ENCODE measurements at regions of chr2 and their contacts with region 1.

Region 1: DNA sequence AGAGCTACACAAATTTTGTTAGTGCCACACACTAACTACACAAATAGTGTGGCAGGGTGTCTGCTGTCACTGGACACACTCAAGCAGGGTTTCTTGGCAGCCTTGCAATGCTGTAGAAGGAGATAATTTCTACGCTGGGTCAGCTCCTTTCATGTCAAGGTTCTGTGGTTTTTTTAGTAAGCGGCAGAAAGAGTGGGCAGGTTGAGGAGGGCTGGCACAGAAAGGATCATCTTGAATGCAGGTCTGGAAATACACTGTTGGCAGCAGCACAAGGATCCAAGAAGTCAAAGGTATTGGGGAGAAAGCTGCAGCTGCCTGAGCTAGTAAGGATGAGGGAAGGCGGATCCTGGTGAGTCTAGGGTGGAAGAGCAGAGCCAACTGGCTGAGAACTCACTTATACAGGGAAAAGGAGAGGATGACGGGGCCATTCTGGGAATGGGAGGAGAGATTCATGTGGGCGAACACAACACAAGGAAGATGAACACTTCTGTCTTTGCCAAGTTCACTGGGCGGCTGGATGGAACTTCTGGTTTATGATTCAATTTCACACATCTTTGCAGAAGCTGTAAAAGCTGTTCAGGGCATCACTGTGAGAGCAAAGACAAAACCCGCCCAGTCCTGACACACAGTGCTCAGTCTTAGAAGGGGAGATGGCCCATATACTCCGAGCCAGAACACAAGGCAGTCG is 16.9 kb upstream of the CYRIA start:
- DNase-seq: no peak
- H3K4me3 Mint-ChIP-seq: no peak overlapping the region
- H3K27ac Mint-ChIP-seq: no peak overlapping the region
- H3K4me1 Mint-ChIP-seq: no peaks in the 10 kb centered on the region
- H3K27me3 Mint-ChIP-seq: peaks cover 10% of the 10 kb centered on the region
- CTCF ChIP-seq: no peak

Region 2: GRCh38 chr2:16334886-16335603 is 347.5 kb before region 1 on chr2:
- CTCF ChIA-PET with region 1: no interaction called
- POLR2A ChIA-PET with region 1: no interaction called
- intact Hi-C with region 1: loop called (anchors 5 kb)
- DNase-seq: no peak
- H3K4me3 Mint-ChIP-seq: no peak overlapping the region
- H3K27ac Mint-ChIP-seq: no peak overlapping the region
- H3K4me1 Mint-ChIP-seq: no peaks in the 10 kb centered on the region
- H3K27me3 Mint-ChIP-seq: no peaks in the 10 kb centered on the region
- CTCF ChIP-seq: no peak

Region 3: GRCh38 chr2:16739778-16740581 is 57.4 kb after region 1 on chr2:
- CTCF ChIA-PET with region 1: no interaction called
- POLR2A ChIA-PET with region 1: interaction called, 5 read pairs
- intact Hi-C with region 1: loop called (anchors 10 kb)
- DNase-seq: peak; percentile 91
- H3K4me3 Mint-ChIP-seq: no peak overlapping the region
- H3K27ac Mint-ChIP-seq: peak overlapping the region; percentile 37
- H3K4me1 Mint-ChIP-seq: peaks cover 22% of the 10 kb centered on the region
- H3K27me3 Mint-ChIP-seq: no peaks in the 10 kb centered on the region
- CTCF ChIP-seq: no peak

Measured in MCF 10A (cell line).